Activated CD4-positive, alpha-beta T cell treated with anti-CD3 and anti-CD28 coated beads for 36 hours (primary cell): ENCODE measurements at regions of chr10 and their contacts with region 1.

Region 1: DNA sequence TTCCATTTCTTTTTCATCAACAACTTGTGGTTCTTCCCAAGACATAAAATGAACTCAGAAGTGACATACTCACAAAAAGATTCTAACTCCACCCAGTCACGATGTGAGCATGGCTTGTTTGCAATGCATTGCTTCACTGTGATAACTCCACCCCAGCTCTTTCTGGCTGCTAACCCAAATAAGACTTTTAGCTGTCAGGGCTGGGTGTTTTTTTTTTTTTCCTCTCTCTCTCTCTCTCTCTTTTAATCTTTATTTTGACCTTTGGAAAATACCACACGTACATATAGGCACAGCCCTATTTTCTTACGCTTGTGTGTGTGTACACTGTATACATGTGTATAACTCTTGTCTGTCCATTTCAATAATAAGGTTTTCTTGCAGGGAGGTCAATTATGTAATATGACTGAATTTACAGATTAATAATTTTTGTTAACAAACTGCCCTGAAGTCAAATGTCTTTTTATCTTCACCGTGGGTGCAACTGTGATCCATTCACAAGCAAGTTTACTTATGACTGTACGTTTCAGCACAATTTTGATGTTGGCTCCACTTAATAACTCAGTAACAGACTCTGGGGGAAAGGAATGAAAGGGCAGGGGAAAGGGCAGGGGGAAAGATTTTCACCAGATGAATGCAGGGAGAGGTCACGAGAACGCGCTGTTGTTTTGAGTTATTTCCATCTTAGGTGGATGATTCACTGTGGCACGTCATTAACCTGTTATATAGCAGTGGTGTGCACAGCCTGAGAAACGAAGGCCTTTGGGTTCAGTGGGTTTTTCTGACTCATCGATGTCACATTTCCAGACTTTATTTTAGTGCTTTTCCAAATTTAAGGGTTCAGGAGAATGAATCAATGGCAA is 49.1 kb downstream of the APBB1IP start:
- DNase-seq: peak; percentile 83
- ATAC-seq: peak; percentile 80
- H3K4me3 Mint-ChIP-seq: peak overlapping the region; percentile 61
- H3K27ac Mint-ChIP-seq: peak overlapping the region; percentile 97
- H3K4me1 Mint-ChIP-seq: peaks cover 72% of the 10 kb centered on the region
- H3K27me3 Mint-ChIP-seq: no peaks in the 10 kb centered on the region

Region 2: DNA sequence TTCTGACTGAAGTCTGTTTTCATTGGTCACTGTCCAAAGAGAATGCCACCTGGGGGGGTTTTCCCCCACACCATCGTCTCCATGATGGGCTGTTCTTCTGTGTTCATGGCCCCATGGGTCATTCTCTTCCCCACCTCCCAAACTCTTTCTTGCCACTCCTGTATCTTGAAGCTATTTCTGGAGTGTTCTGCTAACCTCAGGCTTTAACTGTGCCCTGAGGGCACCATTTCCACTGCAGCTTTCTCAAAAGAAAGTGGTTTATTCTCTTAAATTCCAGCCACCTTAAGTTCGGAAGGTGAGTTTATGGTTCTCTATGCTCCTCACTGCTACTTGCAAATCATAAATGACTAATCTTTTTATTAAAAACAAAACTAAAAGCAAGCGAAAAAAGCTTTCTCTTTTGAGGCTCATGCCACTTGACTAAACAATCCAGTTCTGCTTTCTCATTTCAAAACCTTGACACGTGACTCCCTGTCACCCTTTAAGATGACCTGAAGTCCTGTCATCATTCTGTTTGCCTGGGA is 56.5 kb before region 1 on chr10:
- CTCF ChIA-PET with region 1: no interaction called
- POLR2A ChIA-PET with region 1: no interaction called
- intact Hi-C with region 1: loop called in 1 of 2 experiments (anchors 1 kb)
- DNase-seq: peak; percentile 46
- ATAC-seq: peak; percentile 97
- H3K4me3 Mint-ChIP-seq: peak overlapping the region; percentile 43
- H3K27ac Mint-ChIP-seq: peak overlapping the region; percentile 92
- H3K4me1 Mint-ChIP-seq: peaks cover 29% of the 10 kb centered on the region
- H3K27me3 Mint-ChIP-seq: no peaks in the 10 kb centered on the region

Region 3: GRCh38 chr10:26448706-26449435 is 38.4 kb before region 1 on chr10:
- CTCF ChIA-PET with region 1: interaction called, 3 read pairs
- POLR2A ChIA-PET with region 1: no interaction called
- intact Hi-C with region 1: loop called (anchors 1 kb)
- DNase-seq: peak; percentile 76
- ATAC-seq: peak; percentile 34
- H3K4me3 Mint-ChIP-seq: peak overlapping the region; percentile 54
- H3K27ac Mint-ChIP-seq: peak overlapping the region; percentile 89
- H3K4me1 Mint-ChIP-seq: peaks cover 86% of the 10 kb centered on the region
- H3K27me3 Mint-ChIP-seq: no peaks in the 10 kb centered on the region

Region 4: DNA sequence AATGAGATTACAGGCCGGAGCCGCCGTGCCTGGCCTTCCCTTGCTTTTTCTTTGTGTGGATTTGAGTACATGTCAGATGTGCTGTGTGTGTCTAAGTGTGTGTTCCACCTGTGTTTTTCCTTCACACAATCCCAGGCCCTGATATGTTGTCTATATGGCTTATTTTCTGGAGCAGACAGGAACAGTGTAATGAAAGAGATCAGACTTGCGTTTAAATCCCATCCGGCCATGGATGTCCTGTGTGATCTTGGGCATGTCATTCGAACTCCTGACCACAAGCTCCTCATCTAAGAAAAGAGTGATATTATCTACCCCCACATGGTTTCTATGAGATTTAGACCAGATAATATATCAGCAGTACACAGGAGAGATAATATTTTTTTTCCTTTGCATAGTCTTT is 11.8 kb before region 1 on chr10:
- CTCF ChIA-PET with region 1: no interaction called
- POLR2A ChIA-PET with region 1: interaction called, 3 read pairs
- intact Hi-C with region 1: loop called in 1 of 2 experiments (anchors 1 kb)
- DNase-seq: no peak
- ATAC-seq: peak; percentile 8
- H3K4me3 Mint-ChIP-seq: peak overlapping the region; percentile 47
- H3K27ac Mint-ChIP-seq: peak overlapping the region; percentile 92
- H3K4me1 Mint-ChIP-seq: peaks cover 85% of the 10 kb centered on the region
- H3K27me3 Mint-ChIP-seq: no peaks in the 10 kb centered on the region

Region 5: DNA sequence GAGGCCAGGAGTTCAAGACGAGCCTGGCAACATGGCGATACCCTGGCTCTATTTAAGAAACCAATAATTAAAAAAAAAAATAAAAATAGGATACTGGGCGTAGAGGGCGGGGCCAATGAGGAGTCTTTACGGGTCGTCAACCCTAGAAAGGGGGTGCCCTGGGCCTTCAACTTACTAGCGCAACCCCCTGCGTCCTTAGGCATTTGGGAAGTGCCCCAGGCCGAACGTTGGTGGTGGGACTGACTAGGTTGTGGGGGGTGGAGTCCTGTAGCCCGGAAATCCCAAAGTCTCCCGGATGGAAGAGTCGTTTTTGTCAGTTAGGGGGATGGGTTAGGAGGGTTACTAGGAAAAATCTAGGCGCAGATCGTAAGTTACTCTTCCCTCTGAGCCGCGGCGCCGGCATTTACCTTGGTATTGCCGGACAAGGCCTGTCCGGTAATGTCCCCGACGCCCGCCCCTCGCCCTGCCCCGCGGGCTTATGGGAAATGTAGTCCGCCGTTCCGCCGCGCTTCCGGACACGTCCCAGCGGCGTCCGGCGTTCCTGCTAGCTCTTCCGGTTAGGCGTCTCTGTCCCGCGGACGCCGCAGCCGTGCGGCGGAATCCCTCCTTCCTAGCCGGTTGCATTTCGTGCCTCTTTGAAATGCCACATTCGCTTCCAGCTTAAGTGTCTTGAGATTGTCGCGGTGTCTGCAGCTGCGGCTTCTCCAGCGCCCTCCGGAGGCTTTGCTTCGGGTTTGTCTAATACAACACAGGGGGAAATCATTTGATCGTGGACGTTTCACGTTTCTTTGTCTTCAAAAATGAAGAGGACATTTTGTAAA is 754.6 kb after region 1 on chr10:
- CTCF ChIA-PET with region 1: no interaction called
- POLR2A ChIA-PET with region 1: no interaction called
- intact Hi-C with region 1: loop called in 1 of 2 experiments (anchors 5 kb)
- DNase-seq: peak; percentile 94
- ATAC-seq: peak; percentile 71
- H3K4me3 Mint-ChIP-seq: peak overlapping the region; percentile 98
- H3K27ac Mint-ChIP-seq: peak overlapping the region; percentile 100
- H3K4me1 Mint-ChIP-seq: peaks cover 28% of the 10 kb centered on the region
- H3K27me3 Mint-ChIP-seq: no peaks in the 10 kb centered on the region

Region 6: DNA sequence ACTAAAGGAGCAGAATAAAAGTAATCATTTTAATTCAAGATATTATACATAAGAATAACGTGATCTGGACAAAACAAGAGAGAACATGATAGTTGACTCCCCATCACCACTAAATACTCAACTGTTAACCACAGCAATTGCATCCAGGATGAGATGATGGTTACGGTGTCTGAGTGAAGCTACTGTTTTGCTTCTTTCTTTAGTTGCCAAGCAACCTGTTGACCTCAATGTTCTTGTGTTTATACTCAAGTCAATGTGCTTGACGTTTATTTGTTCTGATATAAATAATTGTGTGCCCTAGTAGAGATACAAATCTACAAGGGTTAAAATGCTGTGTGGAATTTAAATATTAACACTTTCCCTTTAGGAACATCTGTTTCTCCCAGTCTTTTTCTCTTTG is 1847.1 kb after region 1 on chr10:
- CTCF ChIA-PET with region 1: no interaction called
- POLR2A ChIA-PET with region 1: no interaction called
- intact Hi-C with region 1: loop called in 1 of 2 experiments (anchors 2 kb)
- DNase-seq: peak; percentile 43
- ATAC-seq: peak; percentile 62
- H3K4me3 Mint-ChIP-seq: peak overlapping the region; percentile 79
- H3K27ac Mint-ChIP-seq: peak overlapping the region; percentile 100
- H3K4me1 Mint-ChIP-seq: peaks cover 70% of the 10 kb centered on the region
- H3K27me3 Mint-ChIP-seq: no peaks in the 10 kb centered on the region